B cell (primary cell): ENCODE measurements at regions of chr5 and their contacts with region 1.

Region 1: DNA sequence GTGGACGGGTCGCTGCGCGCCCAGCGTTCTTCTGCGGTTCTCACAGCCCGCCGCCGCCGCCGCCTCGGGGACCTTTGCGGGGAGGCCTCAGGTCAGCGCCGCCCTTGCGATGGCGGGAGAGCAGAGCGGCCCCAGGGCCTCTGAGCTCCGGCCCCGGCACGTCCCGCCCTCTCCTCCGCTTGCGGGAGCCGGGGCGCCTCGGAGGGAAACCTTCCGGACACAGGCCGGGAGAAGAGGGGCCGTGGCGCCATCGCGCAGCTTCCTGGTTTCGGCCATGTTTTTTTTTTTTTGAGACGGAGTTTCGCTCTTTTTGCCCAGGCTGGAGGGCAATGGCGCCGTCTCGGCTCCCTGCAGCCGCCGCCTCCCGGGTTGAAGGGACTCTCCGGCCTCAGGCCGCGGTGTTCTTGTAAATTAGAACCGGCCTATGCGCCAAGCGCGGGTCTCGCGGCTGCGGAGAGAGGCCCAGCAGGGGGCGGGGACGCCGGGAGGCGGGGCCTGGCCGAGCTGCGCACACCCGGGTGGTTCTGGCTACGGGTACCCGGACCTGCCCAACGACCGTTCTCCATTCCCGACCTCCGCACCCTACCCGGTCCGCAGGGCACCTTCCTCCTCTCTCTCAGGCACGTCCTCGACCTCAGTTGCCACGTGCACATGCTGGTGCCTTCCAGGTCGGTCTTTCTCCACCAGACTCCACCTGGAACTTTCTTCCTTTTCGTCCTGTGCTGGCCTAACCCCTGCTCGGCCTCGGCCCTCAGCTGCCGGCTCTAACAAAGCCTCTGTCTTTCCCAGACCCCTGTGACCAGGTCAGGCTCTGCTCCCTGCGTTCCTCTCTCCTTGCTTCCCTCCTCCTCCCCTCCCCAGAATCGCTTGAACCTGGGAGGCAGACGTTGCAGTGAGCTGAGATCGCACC is 28.8 kb upstream of the MGAT1 start:
- DNase-seq: peak; percentile 87
- ATAC-seq: peak; percentile 83
- H3K4me3 ChIP-seq: peak overlapping the region; percentile 73 to 93 (median 77)
- H3K4me3 Mint-ChIP-seq: peak overlapping the region; percentile 98
- H3K27ac ChIP-seq: peak overlapping the region; percentile 93 to 96
- H3K27ac Mint-ChIP-seq: peak overlapping the region; percentile 98
- H3K4me1 ChIP-seq: peaks cover 35 to 52% of the 10 kb centered on the region in 2 donors
- H3K4me1 Mint-ChIP-seq: peaks cover 49% of the 10 kb centered on the region
- H3K27me3 ChIP-seq: no peaks in the 10 kb centered on the region
- H3K27me3 Mint-ChIP-seq: no peaks in the 10 kb centered on the region
- CTCF ChIP-seq: no peak

Region 2: DNA sequence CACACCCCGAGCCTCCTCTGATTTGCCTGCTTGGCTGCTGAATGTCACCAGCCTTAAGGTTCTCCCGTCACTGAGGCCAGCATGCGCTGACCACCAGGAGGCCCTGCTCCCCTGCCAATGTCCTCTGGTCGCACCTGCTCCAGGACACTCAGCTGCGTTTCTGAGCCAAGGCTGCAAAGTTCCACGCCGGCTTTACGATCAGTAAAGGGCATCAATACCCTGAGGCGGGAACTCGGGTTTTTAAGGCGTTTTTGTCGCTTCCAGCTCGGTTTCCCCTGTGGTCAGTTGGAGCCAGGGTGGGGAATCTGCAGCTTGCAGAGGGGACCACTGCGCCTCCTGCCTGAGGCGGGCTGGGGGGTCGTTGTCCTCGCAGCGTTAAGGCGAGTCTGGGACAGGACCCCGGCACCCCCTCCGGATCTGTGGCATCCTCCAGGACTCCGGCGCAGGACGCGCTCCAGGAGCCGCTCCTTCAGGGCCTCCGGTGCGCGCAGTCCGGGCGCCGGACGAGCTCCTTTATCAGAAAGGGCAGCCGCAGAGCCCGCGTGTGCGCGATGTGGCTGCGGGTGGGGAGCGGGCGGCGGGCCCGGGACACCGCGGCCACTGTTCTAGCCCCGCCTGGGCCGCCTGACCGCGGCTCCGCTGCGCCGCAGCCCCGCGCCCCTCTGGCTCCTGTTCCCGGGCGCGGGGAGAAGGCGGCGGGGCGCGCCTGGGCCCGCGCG is 157.9 kb before region 1 on chr5:
- CTCF ChIA-PET with region 1: no interaction called
- POLR2A ChIA-PET with region 1: interaction called, 11 read pairs
- intact Hi-C with region 1: no loop called
- DNase-seq: no peak
- ATAC-seq: no peak
- H3K4me3 ChIP-seq: no peak overlapping the region
- H3K4me3 Mint-ChIP-seq: no peak overlapping the region
- H3K27ac ChIP-seq: no peak overlapping the region
- H3K27ac Mint-ChIP-seq: no peak overlapping the region
- H3K4me1 ChIP-seq: peaks cover 0 to 5% of the 10 kb centered on the region in 2 donors
- H3K4me1 Mint-ChIP-seq: peaks cover 8% of the 10 kb centered on the region
- H3K27me3 ChIP-seq: peaks cover 0 to 11% (median 4%) of the 10 kb centered on the region in 4 experiments
- H3K27me3 Mint-ChIP-seq: peaks cover 39% of the 10 kb centered on the region
- CTCF ChIP-seq: no peak

Region 3: DNA sequence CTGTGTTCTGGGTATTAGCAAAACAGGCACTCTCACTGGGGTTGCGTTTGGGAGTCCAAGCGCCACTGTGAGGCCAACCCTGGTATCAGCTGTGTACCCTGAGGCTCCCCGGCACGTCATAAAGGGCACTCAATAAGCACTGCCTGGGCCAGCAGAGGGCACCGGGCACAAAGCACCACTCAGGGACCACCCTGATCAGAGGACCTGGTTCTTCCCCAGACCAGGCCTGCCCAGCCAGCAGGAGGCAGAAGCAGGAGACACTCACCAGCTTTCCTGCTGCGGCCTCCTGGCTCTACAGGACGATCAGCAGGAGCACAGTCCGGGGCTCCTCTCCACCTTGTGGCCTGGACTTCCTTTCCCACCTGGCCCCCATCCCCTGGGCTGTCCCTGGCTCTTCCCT is 41.4 kb before region 1 on chr5:
- CTCF ChIA-PET with region 1: interaction called, 22 read pairs
- POLR2A ChIA-PET with region 1: interaction called, 4 read pairs
- intact Hi-C with region 1: loop called (anchors 5 kb)
- DNase-seq: peak; percentile 49
- ATAC-seq: peak; percentile 73
- H3K4me3 ChIP-seq: no peak overlapping the region
- H3K4me3 Mint-ChIP-seq: no peak overlapping the region
- H3K27ac ChIP-seq: no peak overlapping the region
- H3K27ac Mint-ChIP-seq: peak overlapping the region; percentile 46
- H3K4me1 ChIP-seq: peaks cover 16 to 17% of the 10 kb centered on the region in 2 donors
- H3K4me1 Mint-ChIP-seq: peaks cover 38% of the 10 kb centered on the region
- H3K27me3 ChIP-seq: no peaks in the 10 kb centered on the region
- H3K27me3 Mint-ChIP-seq: no peaks in the 10 kb centered on the region
- CTCF ChIP-seq: no peak

Region 4: DNA sequence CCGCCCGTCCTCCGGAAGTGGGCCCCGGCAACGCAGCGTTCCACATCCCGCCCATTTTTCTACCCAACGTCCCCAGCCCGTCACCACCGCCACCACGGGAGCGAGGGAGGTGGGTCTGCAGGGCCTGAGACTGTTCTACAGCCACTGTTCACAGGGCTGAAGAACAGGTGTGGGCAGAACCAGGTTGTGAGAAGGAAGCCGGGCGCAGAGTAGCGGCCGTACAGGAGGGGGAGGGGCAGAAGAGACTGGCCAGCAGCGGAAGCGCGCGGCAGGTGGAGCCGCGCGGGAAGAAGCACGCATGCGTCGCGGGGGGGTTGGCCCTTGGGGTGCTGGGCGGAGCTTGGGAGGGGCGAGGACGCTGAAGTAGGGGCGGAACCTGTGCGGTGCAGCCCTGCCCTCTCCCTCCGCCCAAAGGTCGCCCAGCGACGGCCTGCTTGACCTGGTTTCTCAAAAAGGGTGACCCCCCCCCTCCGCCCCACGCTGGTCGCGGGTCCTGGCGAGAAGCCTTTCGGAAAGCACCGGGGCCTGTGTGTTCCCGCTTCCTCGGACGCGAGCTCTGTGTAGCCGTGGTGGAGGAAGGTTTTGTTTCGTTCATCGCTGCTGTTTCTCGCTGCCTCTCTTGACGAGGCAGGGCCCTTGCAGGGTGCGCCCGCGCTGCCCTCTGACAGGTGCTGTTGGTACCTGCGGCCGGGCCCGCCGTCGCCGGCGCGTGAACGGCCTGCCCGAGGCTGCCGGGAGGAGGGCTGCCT is 21.0 kb before region 1 on chr5:
- CTCF ChIA-PET with region 1: interaction called, 47 read pairs
- POLR2A ChIA-PET with region 1: interaction called, 79 read pairs
- intact Hi-C with region 1: loop called (anchors 1 kb)
- DNase-seq: peak; percentile 99
- ATAC-seq: peak; percentile 82
- H3K4me3 ChIP-seq: peak overlapping the region; percentile 47 to 94 (median 71)
- H3K4me3 Mint-ChIP-seq: peak overlapping the region; percentile 88
- H3K27ac ChIP-seq: peak overlapping the region; percentile 81 to 91
- H3K27ac Mint-ChIP-seq: peak overlapping the region; percentile 95
- H3K4me1 ChIP-seq: peaks cover 52 to 60% of the 10 kb centered on the region in 2 donors
- H3K4me1 Mint-ChIP-seq: peaks cover 67% of the 10 kb centered on the region
- H3K27me3 ChIP-seq: no peaks in the 10 kb centered on the region
- H3K27me3 Mint-ChIP-seq: no peaks in the 10 kb centered on the region
- CTCF ChIP-seq: no peak

Region 5: GRCh38 chr5:180868960-180869359 is 37.6 kb after region 1 on chr5:
- CTCF ChIA-PET with region 1: interaction called, 13 read pairs
- POLR2A ChIA-PET with region 1: interaction called, 6 read pairs
- intact Hi-C with region 1: no loop called
- DNase-seq: peak; percentile 67
- ATAC-seq: peak; percentile 53
- H3K4me3 ChIP-seq: no peak overlapping the region
- H3K4me3 Mint-ChIP-seq: no peak overlapping the region
- H3K27ac ChIP-seq: no peak overlapping the region
- H3K27ac Mint-ChIP-seq: peak overlapping the region; percentile 11
- H3K4me1 ChIP-seq: no peaks in the 10 kb centered on the region
- H3K4me1 Mint-ChIP-seq: peaks cover 5% of the 10 kb centered on the region
- H3K27me3 ChIP-seq: no peaks in the 10 kb centered on the region
- H3K27me3 Mint-ChIP-seq: peaks cover 22% of the 10 kb centered on the region
- CTCF ChIP-seq: peak; percentile 71